Right ventricle myocardium inferior (tissue), 1 donor: ENCODE measurements at regions of chr15 and their contacts with region 1.

Region 1: DNA sequence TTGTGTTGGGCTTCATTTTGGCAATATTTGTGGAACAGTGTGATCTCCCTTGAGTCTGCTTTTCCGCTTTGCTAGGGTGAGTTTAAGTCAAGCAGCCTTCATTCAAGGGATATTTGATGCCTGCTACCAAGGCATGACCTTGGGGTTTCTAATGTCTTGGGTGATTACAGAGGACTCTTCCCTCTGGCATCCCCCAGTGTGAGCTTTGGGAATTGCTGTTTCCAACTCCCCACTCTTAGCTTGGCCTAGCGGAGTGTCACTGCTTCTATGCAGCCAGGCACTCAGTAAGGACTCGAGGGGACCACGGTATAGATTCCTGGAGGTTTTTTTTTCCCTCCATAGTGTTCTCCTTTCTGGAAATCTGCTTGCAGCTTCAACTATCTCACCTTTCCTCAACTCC is 21.1 kb downstream of the GCNT3 start:
- DNase-seq: no peak
- ATAC-seq: no peak

Region 2: GRCh38 chr15:59528965-59529402 is 103.7 kb before region 1 on chr15:
- intact Hi-C with region 1: loop called (anchors 10 kb)
- DNase-seq: peak; percentile 80
- ATAC-seq: peak; percentile 88

Region 3: GRCh38 chr15:59594493-59594942 is 38.2 kb before region 1 on chr15:
- intact Hi-C with region 1: no loop called
- DNase-seq: no peak
- ATAC-seq: peak; percentile 52